IMR-90 (cell line): ENCODE measurements at regions of chr19 and their contacts with region 1.

Region 1: GRCh38 chr19:54281007-54281728 is at the start of gene LILRB2:
- DNase-seq: no peak
- ATAC-seq: no peak
- H3K4me3 ChIP-seq: no peak within 1 kb of the TSS
- H3K27ac ChIP-seq: no peak within 1 kb of the TSS
- H3K4me1 ChIP-seq: no peaks in the 10 kb centered on the region
- H3K27me3 ChIP-seq: peaks cover 2% of the 10 kb centered on the region; the same call in 1 of the 2 replicates
- CTCF ChIP-seq: no peak
- POLR2A ChIP-seq: no peak
- RAD21 ChIP-seq: no peak
- total RNA-seq, gene LILRB2: not detected in 2 replicates

Region 2: DNA sequence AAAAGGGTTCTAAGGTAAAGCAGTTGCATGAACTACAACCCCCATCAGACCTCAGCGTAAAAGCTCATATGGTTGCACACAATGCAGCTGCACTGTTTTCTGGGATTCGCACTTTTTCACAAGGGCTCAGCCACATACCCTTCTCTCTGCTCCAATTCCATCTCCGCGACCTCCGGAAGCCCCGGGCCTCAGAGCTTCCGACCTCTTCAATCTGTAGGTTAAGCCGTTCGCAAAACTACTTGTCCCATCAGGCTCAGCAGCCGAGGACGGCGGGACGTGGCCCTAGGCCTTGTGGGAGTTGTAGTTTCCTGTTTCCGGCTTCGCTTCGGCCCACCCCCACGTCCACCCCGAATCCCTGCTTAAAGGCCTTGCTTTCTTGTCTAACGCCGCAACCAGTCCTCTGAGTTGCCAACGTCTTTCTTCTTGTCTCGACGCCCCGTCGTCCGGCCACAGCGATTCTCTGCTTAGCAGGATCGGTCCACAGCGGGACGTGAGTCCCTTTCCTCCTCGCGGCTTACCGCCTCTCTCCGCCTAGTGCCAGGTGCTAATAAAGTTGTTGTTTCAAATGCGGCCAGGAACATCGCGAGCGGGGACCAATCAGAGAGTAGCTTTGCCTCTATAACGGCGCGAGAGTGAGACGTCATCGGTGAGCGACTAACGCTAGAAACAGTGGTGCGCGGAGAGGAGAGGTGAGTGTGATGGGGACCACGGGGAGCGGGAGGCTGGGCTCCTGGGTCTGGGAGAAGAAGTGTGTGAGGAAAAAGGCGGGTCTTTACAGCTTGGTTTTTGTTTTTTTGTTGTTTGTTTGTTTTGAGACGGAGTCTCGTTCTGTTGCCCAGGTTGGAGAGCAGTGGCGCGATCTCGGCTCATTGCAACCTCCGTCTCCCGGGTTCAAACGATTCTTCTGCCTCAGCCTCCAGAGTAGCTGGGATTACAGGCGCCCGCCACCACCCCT is 165.8 kb before region 1 on chr19 and contains the starts of genes PRPF31 and TFPT:
- CTCF ChIA-PET with region 1: no interaction called
- POLR2A ChIA-PET with region 1: no interaction called
- dilution Hi-C with region 1: no loop called
- in situ Hi-C with region 1: no loop called
- intact Hi-C with region 1: no loop called
- DNase-seq: peak; percentile 98
- ATAC-seq: peak; percentile 97
- H3K4me3 ChIP-seq: peak within 1 kb of the TSS; percentile 61
- H3K27ac ChIP-seq: peak within 1 kb of the TSS; percentile 94
- H3K4me1 ChIP-seq: peaks cover 6% of the 10 kb centered on the region
- H3K27me3 ChIP-seq: no peaks in the 10 kb centered on the region
- CTCF ChIP-seq: no peak
- POLR2A ChIP-seq: peak; percentile 68; the same call in 1 of the 2 replicates
- RAD21 ChIP-seq: no peak
- total RNA-seq, gene PRPF31: 66.1 and 66.9 TPM in 2 replicates
- total RNA-seq, gene TFPT: 7.9 and 11.9 TPM in 2 replicates

Region 3: GRCh38 chr19:54630782-54631181 is 349.6 kb after region 1 on chr19:
- CTCF ChIA-PET with region 1: no interaction called
- POLR2A ChIA-PET with region 1: no interaction called
- dilution Hi-C with region 1: no loop called
- in situ Hi-C with region 1: loop called (anchors 5 kb)
- intact Hi-C with region 1: no loop called
- DNase-seq: no peak
- ATAC-seq: no peak
- H3K4me3 ChIP-seq: no peak overlapping the region
- H3K27ac ChIP-seq: no peak overlapping the region
- H3K4me1 ChIP-seq: no peaks in the 10 kb centered on the region
- H3K27me3 ChIP-seq: no peaks in the 10 kb centered on the region
- CTCF ChIP-seq: no peak
- POLR2A ChIP-seq: no peak
- RAD21 ChIP-seq: no peak